ENCODE measurements at regions of chr1 and their contacts with region 1.

Region 1: DNA sequence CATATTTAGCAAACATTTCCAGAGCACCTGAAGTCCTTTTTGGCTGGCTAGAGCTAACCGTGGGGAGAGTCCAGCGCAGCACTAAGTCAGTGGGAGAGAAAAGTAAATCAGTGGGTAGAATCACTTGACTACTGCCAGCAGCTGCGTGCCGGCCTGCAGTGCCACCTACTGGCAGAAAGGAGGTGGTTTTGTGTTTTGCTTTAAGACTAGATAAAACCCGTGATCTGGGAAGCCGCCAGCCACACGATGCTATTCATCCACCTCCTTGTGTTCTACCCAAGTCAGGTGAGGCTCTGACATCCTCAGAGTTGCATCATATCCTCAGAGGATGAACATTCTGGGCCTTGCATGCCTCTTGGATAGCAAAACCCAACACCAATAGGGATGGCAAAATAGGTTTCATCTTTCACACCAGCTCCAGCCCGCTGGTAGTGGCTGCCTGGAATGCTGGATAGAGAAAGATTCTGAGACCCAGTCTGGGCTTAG is 14.1 kb upstream of the HEYL start:
- DNase-seq: peak; percentile 54 to 62 (median 59)
- H3K4me3 ChIP-seq: no peak overlapping the region
- H3K4me3 Mint-ChIP-seq: peak overlapping the region in 1 of 2 donors; percentile 42
- H3K27ac ChIP-seq: no peak overlapping the region
- H3K27ac Mint-ChIP-seq: no peak overlapping the region
- H3K4me1 ChIP-seq: peaks cover 6 to 9% of the 10 kb centered on the region in 2 donors
- H3K4me1 Mint-ChIP-seq: peaks cover 14% of the 10 kb centered on the region
- H3K27me3 ChIP-seq: no peaks in the 10 kb centered on the region
- H3K27me3 Mint-ChIP-seq: peaks cover 0 to 10% (median 4%) of the 10 kb centered on the region in 3 donors
- CTCF ChIP-seq: peak; percentile 91

Region 2: GRCh38 chr1:39588101-39588500 is 65.5 kb before region 1 on chr1:
- intact Hi-C with region 1: loop called in 1 of 2 experiments (anchors 2 kb)
- DNase-seq: no peak
- H3K4me3 ChIP-seq: no peak overlapping the region
- H3K4me3 Mint-ChIP-seq: peak overlapping the region in 1 of 2 donors; percentile 9
- H3K27ac ChIP-seq: no peak overlapping the region
- H3K27ac Mint-ChIP-seq: peak overlapping the region in 1 of 7 donors; percentile 19
- H3K4me1 ChIP-seq: no peaks in the 10 kb centered on the region
- H3K4me1 Mint-ChIP-seq: no peaks in the 10 kb centered on the region
- H3K27me3 ChIP-seq: no peaks in the 10 kb centered on the region
- H3K27me3 Mint-ChIP-seq: peaks cover 2 to 3% (median 3%) of the 10 kb centered on the region in 3 donors
- CTCF ChIP-seq: no peak

Region 3: DNA sequence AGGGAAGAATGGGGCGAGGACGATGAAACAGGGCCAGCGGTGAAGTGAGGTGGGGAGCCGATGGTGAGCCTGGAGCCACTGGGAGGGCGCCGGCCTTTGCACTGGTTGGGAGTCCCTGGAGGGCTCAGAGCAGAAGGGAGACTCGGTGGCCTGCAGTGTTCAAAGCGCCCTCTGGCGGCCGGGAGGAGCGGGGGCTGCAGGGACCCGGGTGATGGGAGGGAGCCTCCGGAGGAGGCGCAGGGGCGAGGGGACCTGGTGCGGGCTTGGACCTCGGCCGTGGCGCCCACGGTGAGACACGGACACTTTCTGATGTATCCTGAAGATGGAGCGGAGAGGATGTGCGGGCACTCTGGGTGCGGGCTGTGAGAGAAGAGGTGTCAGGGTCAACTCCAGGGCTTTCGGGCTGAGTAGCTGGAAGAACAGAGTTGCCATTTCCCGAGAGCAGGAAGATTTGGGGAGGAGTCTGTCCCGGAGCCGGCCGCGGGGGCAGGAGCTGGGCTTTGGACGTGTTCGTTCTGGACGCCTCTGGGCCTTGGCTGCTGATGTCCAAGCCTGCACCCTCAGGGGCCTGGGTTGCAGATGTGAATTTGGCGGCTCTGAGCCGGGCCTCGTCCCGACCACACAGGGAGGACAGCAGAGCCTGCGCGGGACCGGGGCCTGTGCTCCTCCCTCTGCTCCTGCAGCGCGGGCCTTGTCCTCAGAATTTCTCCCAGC is 43.8 kb before region 1 on chr1:
- intact Hi-C with region 1: loop called (anchors 2 to 5 kb)
- DNase-seq: peak; percentile 21 to 69 (median 44)
- H3K4me3 ChIP-seq: no peak overlapping the region
- H3K4me3 Mint-ChIP-seq: peak overlapping the region; percentile 13 to 57
- H3K27ac ChIP-seq: no peak overlapping the region
- H3K27ac Mint-ChIP-seq: peak overlapping the region in 1 of 7 donors; percentile 25
- H3K4me1 ChIP-seq: peaks cover 0 to 4% of the 10 kb centered on the region in 2 donors
- H3K4me1 Mint-ChIP-seq: peaks cover 8% of the 10 kb centered on the region
- H3K27me3 ChIP-seq: no peaks in the 10 kb centered on the region
- H3K27me3 Mint-ChIP-seq: peaks cover 2 to 8% (median 4%) of the 10 kb centered on the region in 3 donors
- CTCF ChIP-seq: peak; percentile 91

Region 4: GRCh38 chr1:39720094-39720999 is 66.8 kb after region 1 on chr1:
- intact Hi-C with region 1: loop called in 1 of 2 experiments (anchors 5 kb)
- DNase-seq: peak; percentile 27 to 53 (median 43)
- H3K4me3 ChIP-seq: no peak overlapping the region
- H3K4me3 Mint-ChIP-seq: no peak overlapping the region
- H3K27ac ChIP-seq: no peak overlapping the region
- H3K27ac Mint-ChIP-seq: no peak overlapping the region
- H3K4me1 ChIP-seq: no peaks in the 10 kb centered on the region
- H3K4me1 Mint-ChIP-seq: peaks cover under 1% of the 10 kb centered on the region
- H3K27me3 ChIP-seq: peaks cover 13 to 49% of the 10 kb centered on the region in 2 donors
- H3K27me3 Mint-ChIP-seq: peaks cover 23 to 42% (median 37%) of the 10 kb centered on the region in 3 donors
- CTCF ChIP-seq: peak; percentile 81

Measured in CD14-positive monocyte (primary cell).